ENCODE measurements at regions of chr12 and their contacts with region 1.

Region 1: GRCh38 chr12:68609998-68610369 is 715 bp upstream of the RAP1B start:
- DNase-seq: peak; percentile 40
- H3K4me3 ChIP-seq: peak overlapping the region; percentile 53
- H3K27ac ChIP-seq: peak overlapping the region; percentile 96
- H3K4me1 ChIP-seq: peaks cover 15% of the 10 kb centered on the region
- H3K27me3 ChIP-seq: no peaks in the 10 kb centered on the region
- CTCF ChIP-seq: no peak

Region 2: DNA sequence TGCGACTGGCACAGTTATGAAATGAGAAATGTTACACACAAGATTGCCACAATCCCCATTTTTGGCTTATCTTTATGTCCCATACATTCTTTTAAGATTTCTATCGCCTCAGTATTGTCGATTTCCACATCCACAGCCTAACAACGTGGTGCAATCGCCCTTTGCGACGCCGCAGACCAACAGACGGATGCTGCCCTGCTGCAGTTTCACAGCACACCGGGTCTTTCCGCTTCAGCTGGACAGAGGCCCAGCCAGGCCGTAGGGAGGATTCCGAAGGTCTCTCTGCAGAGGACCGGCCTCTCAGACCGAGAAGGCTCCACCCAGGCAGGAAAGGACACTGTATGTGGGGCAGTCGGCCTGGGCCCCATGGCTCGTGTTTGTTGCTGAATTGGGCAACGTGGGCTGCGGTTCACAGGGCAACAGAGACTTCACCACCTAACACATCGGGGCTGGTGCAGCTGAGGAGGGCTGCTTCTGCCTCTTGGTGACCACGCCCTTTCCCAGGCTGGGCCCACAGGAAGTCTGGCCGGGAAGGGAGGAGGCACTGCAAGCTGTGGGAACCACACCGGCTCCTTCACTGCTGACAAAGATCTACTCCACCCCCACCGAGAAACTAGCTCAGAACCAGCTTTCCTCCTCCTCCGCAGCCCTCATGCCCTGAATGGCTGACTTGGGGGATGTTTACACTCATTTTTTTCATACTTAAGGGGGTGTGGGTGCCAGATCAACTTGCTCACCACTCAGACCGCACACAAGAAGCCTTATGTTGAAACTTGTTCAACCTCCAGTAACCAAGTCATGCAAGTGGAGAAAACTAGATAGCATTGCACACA is 244.9 kb before region 1 on chr12:
- intact Hi-C with region 1: loop called (anchors 5 kb)
- DNase-seq: peak; percentile 92
- H3K4me3 ChIP-seq: peak overlapping the region; percentile 19
- H3K27ac ChIP-seq: peak overlapping the region; percentile 81
- H3K4me1 ChIP-seq: no peaks in the 10 kb centered on the region
- H3K27me3 ChIP-seq: no peaks in the 10 kb centered on the region
- CTCF ChIP-seq: no peak

Region 3: GRCh38 chr12:68483592-68484383 is 126.2 kb before region 1 on chr12:
- intact Hi-C with region 1: no loop called
- DNase-seq: no peak
- H3K4me3 ChIP-seq: no peak overlapping the region
- H3K27ac ChIP-seq: no peak overlapping the region
- H3K4me1 ChIP-seq: no peaks in the 10 kb centered on the region
- H3K27me3 ChIP-seq: no peaks in the 10 kb centered on the region
- CTCF ChIP-seq: no peak

Region 4: GRCh38 chr12:68821357-68822188 is 211.6 kb after region 1 on chr12:
- intact Hi-C with region 1: no loop called
- DNase-seq: no peak
- H3K4me3 ChIP-seq: no peak overlapping the region
- H3K27ac ChIP-seq: no peak overlapping the region
- H3K4me1 ChIP-seq: no peaks in the 10 kb centered on the region
- H3K27me3 ChIP-seq: no peaks in the 10 kb centered on the region
- CTCF ChIP-seq: no peak